ENCODE measurements at regions of chr17 and their contacts with region 1.

Region 1: DNA sequence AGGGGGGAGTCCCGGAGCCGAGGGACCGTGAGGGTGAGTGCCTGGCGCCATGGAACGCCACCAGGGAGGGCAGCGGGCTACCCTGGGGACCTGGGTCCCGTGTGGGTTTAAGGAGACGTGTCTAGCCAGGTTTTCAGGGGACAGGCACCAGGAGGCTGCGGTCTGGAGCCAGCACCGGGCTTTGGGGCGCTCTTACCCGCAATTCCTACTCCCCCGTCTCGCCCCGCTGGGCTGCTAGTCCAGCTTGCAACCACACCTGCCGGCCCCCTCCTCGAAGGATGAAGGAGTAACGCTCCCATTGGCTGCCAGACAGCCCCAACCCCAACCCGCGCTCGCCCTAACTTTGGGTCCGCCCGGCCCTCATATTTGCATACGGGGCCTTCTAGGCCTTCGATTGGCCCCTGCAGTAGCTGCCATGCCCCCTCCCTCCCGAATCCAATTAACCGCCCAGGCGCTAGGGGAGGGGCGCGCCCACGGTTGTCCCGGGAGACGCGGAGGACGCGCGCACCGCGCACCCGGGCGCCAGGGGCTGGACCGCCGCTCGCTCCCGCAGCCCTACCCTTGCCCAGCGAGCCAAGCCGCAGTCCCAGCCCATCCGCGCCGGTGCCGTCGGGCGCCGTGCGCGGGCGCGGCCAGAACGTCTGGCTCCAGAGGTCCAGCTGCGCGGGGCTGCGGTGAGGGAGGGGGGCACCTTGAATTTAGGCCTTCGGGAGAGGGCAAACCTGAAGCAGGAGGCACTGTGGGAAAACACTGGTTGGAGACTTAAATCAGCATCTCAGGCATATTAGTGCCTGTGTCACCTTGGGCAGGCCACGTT is at the start of gene TTLL6:
- DNase-seq: peak; percentile 97
- H3K4me3 ChIP-seq: peak within 1 kb of the TSS; percentile 48
- H3K27ac ChIP-seq: no peak within 1 kb of the TSS
- H3K4me1 ChIP-seq: peaks cover 13% of the 10 kb centered on the region
- H3K27me3 ChIP-seq: no peaks in the 10 kb centered on the region
- CTCF ChIP-seq: no peak
- total RNA-seq, gene TTLL6: 2.1 and 2.3 TPM in 2 replicates

Region 2: DNA sequence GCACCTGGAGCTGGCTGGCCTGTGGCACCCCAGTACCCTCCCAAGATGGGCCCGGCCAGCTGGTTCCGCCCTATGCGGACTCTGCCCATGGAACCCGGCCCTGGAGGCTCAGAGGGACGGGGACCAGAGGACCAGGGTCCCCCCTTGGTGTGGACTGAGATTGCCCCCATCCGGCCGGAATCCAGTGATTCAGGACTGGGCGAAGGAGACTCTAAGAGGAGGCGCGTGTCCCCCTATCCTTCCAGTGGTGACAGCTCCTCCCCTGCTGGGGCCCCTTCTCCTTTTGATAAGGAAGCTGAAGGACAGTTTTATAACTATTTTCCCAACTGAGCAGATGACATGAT is 1072.0 kb before region 1 on chr17:
- CTCF ChIA-PET with region 1: no interaction called
- POLR2A ChIA-PET with region 1: no interaction called
- intact Hi-C with region 1: no loop called
- DNase-seq: no peak
- H3K4me3 ChIP-seq: no peak overlapping the region
- H3K27ac ChIP-seq: no peak overlapping the region
- H3K4me1 ChIP-seq: no peaks in the 10 kb centered on the region
- H3K27me3 ChIP-seq: peaks cover 5% of the 10 kb centered on the region
- CTCF ChIP-seq: no peak

Region 3: GRCh38 chr17:48107168-48108132 is 709.5 kb before region 1 on chr17 and contains the start of gene SNX11:
- CTCF ChIA-PET with region 1: interaction called, 4 read pairs
- POLR2A ChIA-PET with region 1: interaction called, 13 read pairs
- intact Hi-C with region 1: no loop called
- DNase-seq: peak; percentile 97
- H3K4me3 ChIP-seq: peak within 1 kb of the TSS; percentile 76
- H3K27ac ChIP-seq: peak within 1 kb of the TSS; percentile 72
- H3K4me1 ChIP-seq: peaks cover 26% of the 10 kb centered on the region
- H3K27me3 ChIP-seq: no peaks in the 10 kb centered on the region
- CTCF ChIP-seq: no peak
- total RNA-seq, gene SNX11: 25.1 and 27.6 TPM in 2 replicates

Region 4: GRCh38 chr17:48543107-48543853 is 273.7 kb before region 1 on chr17:
- CTCF ChIA-PET with region 1: no interaction called
- POLR2A ChIA-PET with region 1: no interaction called
- intact Hi-C with region 1: no loop called
- DNase-seq: peak; percentile 67
- H3K4me3 ChIP-seq: peak overlapping the region; percentile 85
- H3K27ac ChIP-seq: peak overlapping the region; percentile 95
- H3K4me1 ChIP-seq: peaks cover 38% of the 10 kb centered on the region
- H3K27me3 ChIP-seq: no peaks in the 10 kb centered on the region
- CTCF ChIP-seq: no peak; the same call in 1 of the 2 replicates

Region 5: DNA sequence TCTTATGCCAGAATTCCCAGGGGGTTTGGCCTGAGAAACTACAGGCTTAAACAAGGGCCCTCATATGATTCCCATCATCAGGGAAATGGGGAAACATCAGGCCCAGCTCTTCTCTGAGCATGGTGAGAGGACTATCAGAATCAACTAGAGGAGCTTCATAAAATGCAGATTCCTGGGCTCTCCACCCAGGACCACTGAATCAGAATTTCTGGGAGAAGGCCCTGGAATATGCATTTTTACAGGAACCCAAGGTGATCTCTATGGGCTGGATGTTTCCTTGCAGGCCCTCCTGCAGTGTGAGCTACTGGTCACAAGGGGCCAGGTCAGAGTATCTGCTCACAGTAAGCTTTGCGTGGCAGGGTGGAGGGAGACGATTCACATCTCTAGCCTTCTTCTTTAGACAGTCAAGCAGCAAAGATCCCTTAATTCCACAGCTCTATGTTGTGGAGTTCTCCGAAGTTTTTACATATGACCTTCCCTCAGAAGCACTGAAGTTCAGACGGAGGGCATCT is 49.7 kb before region 1 on chr17:
- CTCF ChIA-PET with region 1: no interaction called
- POLR2A ChIA-PET with region 1: interaction called, 11 read pairs
- intact Hi-C with region 1: no loop called
- DNase-seq: no peak
- H3K4me3 ChIP-seq: no peak overlapping the region
- H3K27ac ChIP-seq: no peak overlapping the region
- H3K4me1 ChIP-seq: peaks cover 8% of the 10 kb centered on the region
- H3K27me3 ChIP-seq: no peaks in the 10 kb centered on the region
- CTCF ChIP-seq: no peak

Region 6: DNA sequence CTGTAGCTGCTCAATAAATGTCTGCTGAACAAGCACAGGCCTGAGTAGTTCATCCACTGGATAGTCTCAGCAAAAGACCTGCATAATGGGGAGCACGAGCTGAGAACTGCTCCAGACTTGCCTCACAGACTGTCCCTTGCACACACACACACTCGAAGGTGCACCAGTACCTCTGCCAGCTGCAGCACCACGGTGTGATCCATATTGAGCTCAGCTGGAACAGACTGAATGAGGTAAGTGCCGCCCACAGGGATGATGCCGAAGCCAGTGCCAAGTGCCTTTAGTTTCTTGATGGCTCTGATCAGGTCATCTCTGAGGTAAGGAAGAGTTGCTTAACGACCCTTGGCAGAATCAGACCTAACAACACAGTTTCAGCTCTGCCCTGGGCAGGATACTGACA is 116.1 kb after region 1 on chr17:
- CTCF ChIA-PET with region 1: no interaction called
- POLR2A ChIA-PET with region 1: no interaction called
- intact Hi-C with region 1: no loop called
- DNase-seq: no peak
- H3K4me3 ChIP-seq: no peak overlapping the region
- H3K27ac ChIP-seq: no peak overlapping the region
- H3K4me1 ChIP-seq: peaks cover 4% of the 10 kb centered on the region
- H3K27me3 ChIP-seq: no peaks in the 10 kb centered on the region
- CTCF ChIP-seq: no peak

Region 7: GRCh38 chr17:49515196-49515770 is 698.3 kb after region 1 on chr17:
- CTCF ChIA-PET with region 1: no interaction called
- POLR2A ChIA-PET with region 1: no interaction called
- intact Hi-C with region 1: no loop called
- DNase-seq: no peak
- H3K4me3 ChIP-seq: no peak overlapping the region
- H3K27ac ChIP-seq: peak overlapping the region; percentile 31
- H3K4me1 ChIP-seq: no peaks in the 10 kb centered on the region
- H3K27me3 ChIP-seq: no peaks in the 10 kb centered on the region
- CTCF ChIP-seq: no peak

Measured in A673 (cell line).